Left cardiac atrium (tissue), 4 donors: ENCODE measurements at regions of chr9 and their contacts with region 1.

Region 1: GRCh38 chr9:32487981-32488380 is 38.0 kb downstream of the RIGI start:
- DNase-seq: no peak
- ATAC-seq: no peak

Region 2: DNA sequence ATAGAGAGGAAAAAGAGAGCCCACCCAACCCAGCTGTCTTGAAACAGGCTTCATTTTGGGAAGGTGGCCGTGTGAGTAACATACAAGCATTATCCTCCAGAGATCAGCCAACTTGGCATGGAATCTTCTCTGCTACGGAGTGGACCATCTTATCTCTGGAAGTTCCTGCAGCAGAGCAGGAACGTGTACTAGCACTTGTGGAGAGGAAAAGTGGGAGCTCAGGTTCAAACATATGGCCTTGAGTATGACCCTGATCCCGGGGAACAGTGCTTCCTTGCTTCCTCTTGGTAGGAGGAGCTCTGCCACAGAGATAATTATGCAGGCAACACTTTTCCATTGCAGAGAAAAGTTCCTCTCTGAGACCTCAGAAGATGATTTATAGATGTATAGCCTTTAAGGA is 594.0 kb before region 1 on chr9:
- intact Hi-C with region 1: no loop called
- DNase-seq: no peak
- ATAC-seq: no peak

Region 3: DNA sequence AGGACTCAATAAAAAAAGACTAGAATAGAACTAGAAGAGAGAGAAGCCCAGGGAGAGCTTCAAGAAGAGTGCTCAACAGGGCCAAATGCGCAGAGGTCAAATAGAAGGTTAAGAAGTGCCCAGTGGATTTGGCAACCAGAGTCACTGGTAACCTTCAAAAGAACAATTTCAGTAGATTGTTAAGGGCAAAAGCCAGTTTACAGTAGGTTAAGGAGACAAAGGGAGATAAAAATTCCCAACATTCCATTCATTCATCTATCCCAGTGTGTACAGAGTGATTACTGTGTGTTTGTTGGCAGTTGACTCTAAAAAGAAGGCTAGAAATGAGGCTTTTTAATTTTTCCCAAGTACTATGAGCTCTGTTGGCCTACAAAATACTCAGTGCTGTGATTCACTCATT is 31.4 kb before region 1 on chr9:
- intact Hi-C with region 1: no loop called
- DNase-seq: no peak
- ATAC-seq: no peak

Region 4: GRCh38 chr9:32533336-32533735 is 45.4 kb after region 1 on chr9:
- intact Hi-C with region 1: loop called in 1 of 2 experiments (anchors 5 kb)
- DNase-seq: no peak
- ATAC-seq: no peak